ENCODE measurements at regions of chr11 and their contacts with region 1.

Region 1: GRCh38 chr11:133576351-133576750 is 44.0 kb upstream of the OPCML start:
- DNase-seq: peak in 1 of 2 experiments; percentile 91
- H3K4me3 ChIP-seq: no peak overlapping the region
- H3K27ac ChIP-seq: no peak overlapping the region
- H3K4me1 ChIP-seq: peaks cover 0 to 10% (median 6%) of the 10 kb centered on the region in 4 experiments; a peak in 4 of 7 replicates
- H3K27me3 ChIP-seq: no peaks in the 10 kb centered on the region; a peak in 2 of 7 replicates
- CTCF ChIP-seq: peak; percentile 78 to 87 (median 85)
- EP300 ChIP-seq: no peak
- POLR2A ChIP-seq: no peak
- RAD21 ChIP-seq: peak; percentile 77 to 83

Region 2: GRCh38 chr11:133553885-133554740 is 22.2 kb before region 1 on chr11:
- CTCF ChIA-PET with region 1: interaction called, 31 read pairs
- POLR2A ChIA-PET with region 1: no interaction called
- DNase-seq: no peak
- H3K4me3 ChIP-seq: no peak overlapping the region
- H3K27ac ChIP-seq: no peak overlapping the region
- H3K4me1 ChIP-seq: peaks cover 0 to 3% (median 0%) of the 10 kb centered on the region in 4 experiments; a peak in 2 of 7 replicates
- H3K27me3 ChIP-seq: no peaks in the 10 kb centered on the region
- CTCF ChIP-seq: no peak
- EP300 ChIP-seq: no peak
- POLR2A ChIP-seq: no peak
- RAD21 ChIP-seq: no peak

Region 3: GRCh38 chr11:133593036-133593435 is 16.7 kb after region 1 on chr11:
- CTCF ChIA-PET with region 1: interaction called, 16 read pairs
- POLR2A ChIA-PET with region 1: no interaction called
- DNase-seq: no peak
- H3K4me3 ChIP-seq: no peak overlapping the region
- H3K27ac ChIP-seq: no peak overlapping the region
- H3K4me1 ChIP-seq: no peaks in the 10 kb centered on the region
- H3K27me3 ChIP-seq: no peaks in the 10 kb centered on the region
- CTCF ChIP-seq: no peak
- EP300 ChIP-seq: no peak
- POLR2A ChIP-seq: no peak
- RAD21 ChIP-seq: no peak

Region 4: GRCh38 chr11:133821776-133822175 is 245.4 kb after region 1 on chr11:
- CTCF ChIA-PET with region 1: interaction called, 12 read pairs
- POLR2A ChIA-PET with region 1: no interaction called
- DNase-seq: peak; percentile 66 to 81
- H3K4me3 ChIP-seq: no peak overlapping the region
- H3K27ac ChIP-seq: no peak overlapping the region
- H3K4me1 ChIP-seq: peaks cover 0 to 2% (median 0%) of the 10 kb centered on the region in 4 experiments; a peak in 1 of 7 replicates
- H3K27me3 ChIP-seq: no peaks in the 10 kb centered on the region; a peak in 1 of 7 replicates
- CTCF ChIP-seq: peak; percentile 84 to 95 (median 90)
- EP300 ChIP-seq: no peak
- POLR2A ChIP-seq: no peak
- RAD21 ChIP-seq: peak; percentile 94 to 95

Region 5: DNA sequence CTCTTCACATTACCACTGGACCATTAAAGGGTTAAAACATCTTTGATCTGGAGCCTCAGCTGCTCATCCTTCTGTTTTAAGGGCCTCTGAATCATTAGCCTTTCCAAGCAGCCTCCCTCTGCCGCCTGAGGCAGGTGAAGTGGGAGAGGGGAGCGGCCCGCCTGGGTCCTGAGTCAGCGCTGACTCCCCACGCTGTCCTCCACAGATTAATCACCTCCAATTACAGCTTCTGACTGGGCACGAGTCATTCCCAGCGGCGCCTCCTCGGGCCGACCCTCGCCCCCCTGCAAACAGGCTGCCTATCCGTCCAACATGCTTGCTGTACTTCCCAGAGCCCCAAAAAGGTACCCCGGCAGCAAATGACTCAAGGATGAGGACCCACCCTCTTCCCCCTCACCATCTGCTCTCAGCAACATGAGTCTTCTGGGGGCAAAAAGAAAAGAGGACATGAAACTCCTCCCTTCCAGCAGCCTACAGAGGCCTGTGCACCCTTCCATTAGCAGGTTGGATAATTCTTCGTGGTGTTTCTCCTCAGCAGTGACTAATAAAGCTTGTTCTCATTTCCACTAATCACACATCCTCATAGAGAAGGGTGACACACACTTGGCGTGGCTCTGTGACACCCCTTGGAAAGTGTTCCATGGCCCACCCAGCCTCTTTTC is 448.2 kb after region 1 on chr11:
- CTCF ChIA-PET with region 1: no interaction called
- POLR2A ChIA-PET with region 1: no interaction called
- DNase-seq: no peak
- H3K4me3 ChIP-seq: no peak overlapping the region
- H3K27ac ChIP-seq: no peak overlapping the region
- H3K4me1 ChIP-seq: peaks cover 0 to 9% (median 2%) of the 10 kb centered on the region in 4 experiments; a peak in 3 of 7 replicates
- H3K27me3 ChIP-seq: no peaks in the 10 kb centered on the region
- CTCF ChIP-seq: no peak
- EP300 ChIP-seq: no peak
- POLR2A ChIP-seq: no peak
- RAD21 ChIP-seq: no peak